ENCODE measurements at regions of chr3 and their contacts with region 1.

Region 1: DNA sequence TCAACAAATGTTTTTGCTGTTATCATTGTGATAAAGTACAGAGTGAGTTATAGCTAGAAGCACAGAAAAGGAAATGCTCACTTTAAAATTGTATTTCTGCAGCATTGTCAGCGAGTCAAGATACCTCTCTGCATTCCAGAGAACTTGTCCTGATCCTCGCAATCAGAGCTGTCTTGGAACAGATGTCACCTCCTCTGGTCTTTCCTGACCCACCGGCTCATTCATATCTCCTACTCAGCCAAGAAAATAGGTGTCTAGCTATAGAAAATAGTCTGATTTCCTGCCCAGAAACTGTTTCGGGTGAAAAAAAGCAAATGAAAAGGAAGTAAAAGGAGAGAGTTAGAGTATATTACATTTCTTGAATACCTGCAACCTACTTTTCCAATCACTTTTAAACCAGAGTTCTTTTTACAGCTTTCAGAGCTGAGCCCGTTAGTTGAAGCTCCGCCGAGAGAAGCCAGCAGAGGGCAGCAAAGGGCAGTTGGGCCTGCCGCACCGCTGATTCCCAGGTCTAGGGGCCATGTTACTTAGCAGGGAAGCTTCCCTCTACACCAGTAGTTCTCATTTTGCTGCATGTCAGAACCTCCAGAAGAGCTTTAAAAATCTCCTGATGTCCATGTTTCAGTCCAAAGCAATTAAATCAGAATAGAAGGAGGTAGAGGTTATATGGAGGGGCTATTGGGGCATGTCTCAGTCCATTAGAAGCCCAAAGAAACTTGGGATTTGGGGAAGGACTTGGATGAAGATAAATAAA is 185.7 kb upstream of the THRB start:
- DNase-seq: peak; percentile 81
- H3K4me3 ChIP-seq: no peak overlapping the region
- H3K27ac ChIP-seq: no peak overlapping the region
- H3K4me1 ChIP-seq: peaks cover 0 to 13% (median 0%) of the 10 kb centered on the region in 6 donors
- H3K27me3 ChIP-seq: no peaks in the 10 kb centered on the region
- CTCF ChIP-seq: peak in 9 of 11 experiments; percentile 32 to 77 (median 69)
- POLR2A ChIP-seq: no peak

Region 2: GRCh38 chr3:23991683-23992628 is 688.4 kb before region 1 on chr3:
- intact Hi-C with region 1: loop called (anchors 5 kb)
- DNase-seq: no peak
- H3K4me3 ChIP-seq: no peak overlapping the region
- H3K27ac ChIP-seq: no peak overlapping the region
- H3K4me1 ChIP-seq: peaks cover 0 to 15% (median 0%) of the 10 kb centered on the region in 6 donors
- H3K27me3 ChIP-seq: no peaks in the 10 kb centered on the region
- CTCF ChIP-seq: no peak
- POLR2A ChIP-seq: no peak

Region 3: GRCh38 chr3:24237971-24238767 is 442.2 kb before region 1 on chr3:
- intact Hi-C with region 1: loop called (anchors 10 kb)
- DNase-seq: no peak
- H3K4me3 ChIP-seq: no peak overlapping the region
- H3K27ac ChIP-seq: no peak overlapping the region
- H3K4me1 ChIP-seq: peaks cover 0 to 14% (median 3%) of the 10 kb centered on the region in 6 donors
- H3K27me3 ChIP-seq: no peaks in the 10 kb centered on the region
- CTCF ChIP-seq: peak in 10 of 11 experiments; percentile 3 to 70 (median 56)
- POLR2A ChIP-seq: no peak

Region 4: GRCh38 chr3:24521420-24522145 is 158.8 kb before region 1 on chr3:
- intact Hi-C with region 1: loop called (anchors 5 kb)
- DNase-seq: peak; percentile 90
- H3K4me3 ChIP-seq: peak overlapping the region; percentile 42 to 71 (median 56)
- H3K27ac ChIP-seq: peak overlapping the region; percentile 15 to 86 (median 79)
- H3K4me1 ChIP-seq: peaks cover 5 to 40% (median 19%) of the 10 kb centered on the region in 6 donors
- H3K27me3 ChIP-seq: peaks cover 0 to 38% (median 10%) of the 10 kb centered on the region in 7 donors
- CTCF ChIP-seq: peak in 1 of 11 experiments; percentile 21
- POLR2A ChIP-seq: no peak

Region 5: DNA sequence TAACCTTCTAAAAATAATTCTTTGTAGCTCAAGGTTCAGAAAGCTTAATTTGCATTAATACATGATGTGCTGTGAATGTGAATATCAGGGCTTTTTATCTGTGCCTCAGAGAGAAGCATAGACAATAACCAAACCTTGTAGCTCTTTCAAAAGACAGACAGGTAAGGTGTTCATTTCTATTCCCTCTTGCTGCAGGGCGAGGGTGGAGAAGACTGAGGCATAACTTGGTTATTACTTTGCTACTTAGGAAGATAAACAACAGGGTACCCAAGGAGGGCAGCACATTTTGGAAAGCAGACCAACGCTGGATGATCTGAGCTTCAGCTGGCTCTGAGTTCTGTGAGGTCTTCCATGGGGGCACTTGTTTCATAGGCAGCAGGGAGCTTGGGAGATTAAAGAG is 339.1 kb after region 1 on chr3:
- intact Hi-C with region 1: no loop called
- DNase-seq: no peak
- H3K4me3 ChIP-seq: no peak overlapping the region
- H3K27ac ChIP-seq: no peak overlapping the region
- H3K4me1 ChIP-seq: no peaks in the 10 kb centered on the region
- H3K27me3 ChIP-seq: no peaks in the 10 kb centered on the region
- CTCF ChIP-seq: no peak
- POLR2A ChIP-seq: no peak